CD14-positive monocyte (primary cell): ENCODE measurements at regions of chr3 and their contacts with region 1.

Region 1: GRCh38 chr3:188947401-188948280 is 224.1 kb upstream of the TPRG1 start:
- DNase-seq: peak; percentile 71 to 87 (median 84)
- H3K4me3 ChIP-seq: peak overlapping the region; percentile 51 to 77 (median 70)
- H3K4me3 Mint-ChIP-seq: peak overlapping the region; percentile 83 to 88
- H3K27ac ChIP-seq: peak overlapping the region; percentile 97 to 98
- H3K27ac Mint-ChIP-seq: peak overlapping the region; percentile 98 to 100 (median 99)
- H3K4me1 ChIP-seq: peaks cover 98 to 100% of the 10 kb centered on the region in 2 donors
- H3K4me1 Mint-ChIP-seq: peaks cover 95% of the 10 kb centered on the region
- H3K27me3 ChIP-seq: no peaks in the 10 kb centered on the region
- H3K27me3 Mint-ChIP-seq: peaks cover 0 to 2% (median 0%) of the 10 kb centered on the region in 3 donors
- CTCF ChIP-seq: peak; percentile 32

Region 2: GRCh38 chr3:188439080-188439479 is 508.6 kb before region 1 on chr3:
- intact Hi-C with region 1: loop called (anchors 5 to 10 kb)
- DNase-seq: peak; percentile 78 to 97 (median 93)
- H3K4me3 ChIP-seq: peak overlapping the region in 1 of 3 experiments; percentile 50
- H3K4me3 Mint-ChIP-seq: peak overlapping the region in 1 of 2 donors; percentile 48
- H3K27ac ChIP-seq: peak overlapping the region; percentile 40 to 90
- H3K27ac Mint-ChIP-seq: peak overlapping the region; percentile 86 to 96 (median 93)
- H3K4me1 ChIP-seq: peaks cover 26 to 48% of the 10 kb centered on the region in 2 donors
- H3K4me1 Mint-ChIP-seq: peaks cover 42% of the 10 kb centered on the region
- H3K27me3 ChIP-seq: no peaks in the 10 kb centered on the region
- H3K27me3 Mint-ChIP-seq: no peaks in the 10 kb centered on the region
- CTCF ChIP-seq: no peak

Region 3: GRCh38 chr3:188584162-188584529 is 363.5 kb before region 1 on chr3:
- intact Hi-C with region 1: loop called in 1 of 2 experiments (anchors 10 kb)
- DNase-seq: peak in 2 of 3 donors; percentile 30 to 66
- H3K4me3 ChIP-seq: peak overlapping the region in 2 of 3 experiments; percentile 24 to 62
- H3K4me3 Mint-ChIP-seq: peak overlapping the region in 1 of 2 donors; percentile 55
- H3K27ac ChIP-seq: peak overlapping the region in 1 of 2 donors; percentile 61
- H3K27ac Mint-ChIP-seq: peak overlapping the region in 1 of 7 donors; percentile 89
- H3K4me1 ChIP-seq: peaks cover 65 to 73% of the 10 kb centered on the region in 2 donors
- H3K4me1 Mint-ChIP-seq: peaks cover 11% of the 10 kb centered on the region
- H3K27me3 ChIP-seq: no peaks in the 10 kb centered on the region
- H3K27me3 Mint-ChIP-seq: no peaks in the 10 kb centered on the region
- CTCF ChIP-seq: no peak

Region 4: DNA sequence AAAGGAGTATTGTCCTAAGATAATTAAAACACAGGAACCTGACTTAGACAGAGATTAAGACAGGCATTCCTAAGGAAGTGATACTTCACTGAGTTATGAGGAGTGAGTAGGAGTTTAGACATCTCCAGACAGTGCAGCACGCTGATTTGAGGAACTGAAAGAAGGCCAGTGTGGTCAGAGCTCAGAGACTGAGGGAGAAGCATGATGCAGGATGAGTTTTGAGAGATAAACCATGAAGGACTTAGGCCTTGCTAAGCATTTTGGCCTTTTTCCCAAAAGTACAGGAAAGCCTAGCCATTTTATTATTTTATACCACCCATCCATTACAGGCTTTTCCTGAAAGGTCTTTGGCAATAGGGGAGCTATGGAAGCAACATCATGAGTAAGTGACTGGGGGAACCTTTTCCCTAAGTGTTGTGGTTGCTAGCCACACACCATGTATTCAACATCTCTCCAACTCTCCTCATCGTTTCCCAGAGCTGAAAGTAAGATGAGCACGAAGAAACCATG is 151.5 kb before region 1 on chr3:
- intact Hi-C with region 1: loop called in 1 of 2 experiments (anchors 10 kb)
- DNase-seq: peak; percentile 85 to 95 (median 92)
- H3K4me3 ChIP-seq: peak overlapping the region in 1 of 3 experiments; percentile 10
- H3K4me3 Mint-ChIP-seq: no peak overlapping the region
- H3K27ac ChIP-seq: peak overlapping the region; percentile 28 to 84
- H3K27ac Mint-ChIP-seq: peak overlapping the region; percentile 80 to 96 (median 90)
- H3K4me1 ChIP-seq: peaks cover 33 to 48% of the 10 kb centered on the region in 2 donors
- H3K4me1 Mint-ChIP-seq: peaks cover 59% of the 10 kb centered on the region
- H3K27me3 ChIP-seq: no peaks in the 10 kb centered on the region
- H3K27me3 Mint-ChIP-seq: peaks cover 0 to 2% (median 0%) of the 10 kb centered on the region in 3 donors
- CTCF ChIP-seq: no peak

Region 5: GRCh38 chr3:188819939-188820338 is 127.7 kb before region 1 on chr3:
- intact Hi-C with region 1: loop called in 1 of 2 experiments (anchors 5 kb)
- DNase-seq: peak; percentile 63 to 87 (median 74)
- H3K4me3 ChIP-seq: peak overlapping the region in 1 of 3 experiments; percentile 47
- H3K4me3 Mint-ChIP-seq: peak overlapping the region; percentile 35 to 77
- H3K27ac ChIP-seq: peak overlapping the region; percentile 80 to 89
- H3K27ac Mint-ChIP-seq: peak overlapping the region; percentile 92 to 99 (median 95)
- H3K4me1 ChIP-seq: peaks cover 65 to 82% of the 10 kb centered on the region in 2 donors
- H3K4me1 Mint-ChIP-seq: peaks cover 72% of the 10 kb centered on the region
- H3K27me3 ChIP-seq: no peaks in the 10 kb centered on the region
- H3K27me3 Mint-ChIP-seq: peaks cover 0 to 2% (median 0%) of the 10 kb centered on the region in 3 donors
- CTCF ChIP-seq: no peak

Region 6: DNA sequence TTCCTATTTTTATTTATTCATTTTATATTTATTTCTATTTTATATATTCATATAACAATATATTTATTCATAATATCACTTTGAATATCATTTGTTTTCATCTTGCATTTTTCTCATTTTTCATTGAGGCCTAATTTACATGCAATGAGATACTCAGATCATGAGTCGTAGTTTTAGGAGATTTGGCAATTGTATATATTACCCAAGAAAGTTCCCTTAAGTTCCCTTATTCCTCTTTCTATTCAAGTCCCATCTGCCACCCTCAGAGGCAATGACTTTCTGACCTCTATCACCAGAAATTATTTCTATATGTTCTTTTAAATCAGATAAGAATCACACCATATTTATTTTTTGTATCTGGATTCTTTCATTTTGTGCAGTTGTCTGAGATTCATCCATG is 105.0 kb before region 1 on chr3:
- intact Hi-C with region 1: loop called (anchors 1 to 5 kb)
- DNase-seq: peak; percentile 75 to 93 (median 84)
- H3K4me3 ChIP-seq: peak overlapping the region in 1 of 3 experiments; percentile 21
- H3K4me3 Mint-ChIP-seq: peak overlapping the region in 1 of 2 donors; percentile 46
- H3K27ac ChIP-seq: peak overlapping the region; percentile 52 to 80
- H3K27ac Mint-ChIP-seq: peak overlapping the region; percentile 85 to 98 (median 94)
- H3K4me1 ChIP-seq: peaks cover 42 to 59% of the 10 kb centered on the region in 2 donors
- H3K4me1 Mint-ChIP-seq: peaks cover 50% of the 10 kb centered on the region
- H3K27me3 ChIP-seq: no peaks in the 10 kb centered on the region
- H3K27me3 Mint-ChIP-seq: peaks cover 0 to 1% (median 0%) of the 10 kb centered on the region in 3 donors
- CTCF ChIP-seq: no peak

Region 7: DNA sequence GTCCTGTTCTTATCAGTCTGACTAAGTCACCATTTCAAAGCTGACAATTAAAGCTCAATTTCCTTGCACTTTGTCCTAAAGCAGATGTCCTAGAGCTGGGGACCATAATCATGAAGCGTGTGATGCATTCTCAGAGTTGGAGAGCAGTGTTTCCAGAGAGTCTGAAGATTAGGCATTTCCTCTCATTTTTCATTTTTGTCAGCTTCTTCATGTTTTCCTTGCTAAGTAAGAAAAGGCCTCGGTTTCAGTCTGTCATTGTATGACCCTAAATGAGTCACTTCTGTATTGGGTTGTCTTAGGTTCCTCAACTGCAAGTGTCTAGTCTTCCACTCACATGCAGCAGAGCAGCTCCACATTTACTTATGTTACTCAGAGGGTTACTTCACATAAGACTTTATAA is 33.1 kb before region 1 on chr3:
- intact Hi-C with region 1: loop called (anchors 5 kb)
- DNase-seq: peak; percentile 81 to 88 (median 86)
- H3K4me3 ChIP-seq: no peak overlapping the region
- H3K4me3 Mint-ChIP-seq: peak overlapping the region in 1 of 2 donors; percentile 63
- H3K27ac ChIP-seq: peak overlapping the region in 1 of 2 donors; percentile 80
- H3K27ac Mint-ChIP-seq: peak overlapping the region; percentile 76 to 97 (median 89)
- H3K4me1 ChIP-seq: peaks cover 52% of the 10 kb centered on the region in 2 donors
- H3K4me1 Mint-ChIP-seq: peaks cover 55% of the 10 kb centered on the region
- H3K27me3 ChIP-seq: no peaks in the 10 kb centered on the region
- H3K27me3 Mint-ChIP-seq: peaks cover 0 to 2% (median 0%) of the 10 kb centered on the region in 3 donors
- CTCF ChIP-seq: no peak

Region 8: DNA sequence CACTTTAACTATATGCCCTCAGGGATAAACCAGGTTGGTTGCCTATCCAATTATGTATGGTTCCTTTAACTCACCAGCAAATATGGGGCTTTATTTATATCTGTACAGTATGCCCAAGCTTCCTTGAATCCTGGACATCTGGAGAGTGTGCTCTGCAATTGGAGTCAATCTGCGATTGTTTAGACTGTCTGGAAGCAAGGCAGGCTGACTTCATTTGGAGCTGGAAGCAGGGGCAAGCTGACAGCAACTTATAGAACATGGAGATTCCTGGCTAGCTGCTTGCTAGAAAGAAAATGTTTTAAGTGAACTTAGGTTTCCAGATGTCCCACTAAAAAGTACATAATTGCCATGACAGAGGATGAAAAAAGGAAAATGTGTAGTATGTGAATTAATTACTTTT is 160.4 kb after region 1 on chr3:
- intact Hi-C with region 1: no loop called
- DNase-seq: no peak
- H3K4me3 ChIP-seq: no peak overlapping the region
- H3K4me3 Mint-ChIP-seq: no peak overlapping the region
- H3K27ac ChIP-seq: no peak overlapping the region
- H3K27ac Mint-ChIP-seq: no peak overlapping the region
- H3K4me1 ChIP-seq: no peaks in the 10 kb centered on the region
- H3K4me1 Mint-ChIP-seq: no peaks in the 10 kb centered on the region
- H3K27me3 ChIP-seq: no peaks in the 10 kb centered on the region
- H3K27me3 Mint-ChIP-seq: peaks cover 0 to 5% (median 2%) of the 10 kb centered on the region in 3 donors
- CTCF ChIP-seq: no peak